Activated CD4-positive, alpha-beta memory T cell treated with anti-CD3 and anti-CD28 coated beads for 36 hours (primary cell): ENCODE measurements at regions of chr22 and their contacts with region 1.

Region 1: DNA sequence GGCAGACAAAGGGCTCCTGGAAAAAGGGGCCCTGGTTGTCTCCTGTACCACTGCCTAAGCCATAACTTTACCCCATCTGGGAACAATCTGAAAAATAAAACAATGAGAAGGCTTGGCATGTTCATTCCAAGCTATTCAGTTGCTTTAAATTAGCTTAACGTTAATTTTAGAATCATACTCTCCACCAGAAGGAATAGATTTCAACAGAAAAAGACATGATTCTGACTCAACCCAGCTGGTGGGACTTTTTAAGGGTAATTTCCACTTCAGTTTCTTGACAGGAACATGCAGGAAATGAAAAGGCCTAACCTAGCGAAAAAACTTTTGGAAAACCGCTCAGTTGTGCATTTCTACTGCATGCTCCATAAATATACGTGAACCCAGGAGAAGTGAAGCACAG is 7.9 kb downstream of the SF3A1 start:
- DNase-seq: no peak
- H3K4me3 Mint-ChIP-seq: peak overlapping the region; percentile 44
- H3K27ac Mint-ChIP-seq: peak overlapping the region; percentile 89
- H3K4me1 Mint-ChIP-seq: peaks cover 89% of the 10 kb centered on the region
- H3K27me3 Mint-ChIP-seq: no peaks in the 10 kb centered on the region

Region 2: GRCh38 chr22:29820961-29821789 is 527.6 kb before region 1 on chr22:
- CTCF ChIA-PET with region 1: no interaction called
- POLR2A ChIA-PET with region 1: no interaction called
- intact Hi-C with region 1: loop called (anchors 5 kb)
- DNase-seq: peak; percentile 69
- H3K4me3 Mint-ChIP-seq: no peak overlapping the region
- H3K27ac Mint-ChIP-seq: peak overlapping the region; percentile 84
- H3K4me1 Mint-ChIP-seq: peaks cover 8% of the 10 kb centered on the region
- H3K27me3 Mint-ChIP-seq: no peaks in the 10 kb centered on the region

Region 3: DNA sequence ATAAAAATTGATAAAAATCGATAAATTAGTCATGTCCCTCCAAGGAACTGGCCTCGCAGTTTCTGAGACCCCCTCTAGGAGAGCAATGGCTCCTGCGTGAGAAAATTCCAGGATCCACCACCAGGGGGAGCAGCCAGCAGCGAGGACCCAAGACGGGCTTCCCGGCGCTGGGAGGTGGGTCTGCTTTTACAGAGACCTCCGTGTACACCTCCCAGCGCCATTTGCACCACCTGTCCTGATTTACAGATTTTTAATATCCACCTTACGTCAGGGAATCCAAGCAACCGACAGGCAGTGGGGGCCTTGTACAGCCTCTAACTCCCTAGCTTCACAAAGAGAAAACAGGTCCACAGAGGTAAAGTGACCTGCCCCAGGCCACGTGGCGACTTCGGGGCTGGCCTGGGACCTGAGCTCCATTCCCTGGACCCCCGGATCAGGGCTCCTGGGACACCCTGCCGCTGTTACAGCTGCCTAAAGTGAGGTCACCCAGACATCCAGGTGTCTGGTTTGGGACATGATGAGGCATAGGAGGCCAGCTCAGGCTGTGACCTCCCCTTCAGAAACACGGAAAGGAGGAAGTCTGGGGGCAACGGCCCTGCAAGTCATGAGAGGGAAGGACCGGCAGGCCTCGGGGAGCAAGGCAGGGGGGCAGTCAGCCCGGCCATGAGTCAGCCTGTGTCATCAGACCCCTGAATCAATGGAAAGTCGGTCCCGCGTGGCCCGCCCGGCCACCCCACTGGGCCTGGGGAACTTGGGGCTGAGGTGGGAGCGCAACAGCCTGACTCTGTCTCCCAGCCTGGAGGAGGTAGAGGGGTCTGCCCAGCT is 85.7 kb before region 1 on chr22:
- CTCF ChIA-PET with region 1: interaction called, 3 read pairs
- POLR2A ChIA-PET with region 1: no interaction called
- intact Hi-C with region 1: loop called (anchors 1 kb)
- DNase-seq: peak; percentile 86
- H3K4me3 Mint-ChIP-seq: peak overlapping the region; percentile 71
- H3K27ac Mint-ChIP-seq: peak overlapping the region; percentile 69
- H3K4me1 Mint-ChIP-seq: peaks cover 34% of the 10 kb centered on the region
- H3K27me3 Mint-ChIP-seq: no peaks in the 10 kb centered on the region

Region 4: GRCh38 chr22:30305519-30305905 is 43.3 kb before region 1 on chr22:
- CTCF ChIA-PET with region 1: no interaction called
- POLR2A ChIA-PET with region 1: interaction called, 5 read pairs
- intact Hi-C with region 1: loop called (anchors 2 kb)
- DNase-seq: peak; percentile 74
- H3K4me3 Mint-ChIP-seq: peak overlapping the region; percentile 69
- H3K27ac Mint-ChIP-seq: peak overlapping the region; percentile 98
- H3K4me1 Mint-ChIP-seq: peaks cover 96% of the 10 kb centered on the region
- H3K27me3 Mint-ChIP-seq: no peaks in the 10 kb centered on the region

Region 5: GRCh38 chr22:30326706-30327362 is 22.0 kb before region 1 on chr22 and contains the start of gene TBC1D10A:
- CTCF ChIA-PET with region 1: interaction called, 4 read pairs
- POLR2A ChIA-PET with region 1: interaction called, 4 read pairs
- intact Hi-C with region 1: loop called (anchors 1 kb)
- DNase-seq: peak; percentile 96
- H3K4me3 Mint-ChIP-seq: peak within 1 kb of the TSS; percentile 83
- H3K27ac Mint-ChIP-seq: peak within 1 kb of the TSS; percentile 81
- H3K4me1 Mint-ChIP-seq: peaks cover 42% of the 10 kb centered on the region
- H3K27me3 Mint-ChIP-seq: no peaks in the 10 kb centered on the region
- total RNA-seq, gene TBC1D10A: 28.9 to 29.0 TPM

Region 6: GRCh38 chr22:30336752-30337460 is 11.9 kb before region 1 on chr22:
- CTCF ChIA-PET with region 1: no interaction called
- POLR2A ChIA-PET with region 1: interaction called, 6 read pairs
- intact Hi-C with region 1: loop called (anchors 1 kb)
- DNase-seq: no peak
- H3K4me3 Mint-ChIP-seq: no peak overlapping the region
- H3K27ac Mint-ChIP-seq: peak overlapping the region; percentile 54
- H3K4me1 Mint-ChIP-seq: peaks cover 41% of the 10 kb centered on the region
- H3K27me3 Mint-ChIP-seq: no peaks in the 10 kb centered on the region

Region 7: DNA sequence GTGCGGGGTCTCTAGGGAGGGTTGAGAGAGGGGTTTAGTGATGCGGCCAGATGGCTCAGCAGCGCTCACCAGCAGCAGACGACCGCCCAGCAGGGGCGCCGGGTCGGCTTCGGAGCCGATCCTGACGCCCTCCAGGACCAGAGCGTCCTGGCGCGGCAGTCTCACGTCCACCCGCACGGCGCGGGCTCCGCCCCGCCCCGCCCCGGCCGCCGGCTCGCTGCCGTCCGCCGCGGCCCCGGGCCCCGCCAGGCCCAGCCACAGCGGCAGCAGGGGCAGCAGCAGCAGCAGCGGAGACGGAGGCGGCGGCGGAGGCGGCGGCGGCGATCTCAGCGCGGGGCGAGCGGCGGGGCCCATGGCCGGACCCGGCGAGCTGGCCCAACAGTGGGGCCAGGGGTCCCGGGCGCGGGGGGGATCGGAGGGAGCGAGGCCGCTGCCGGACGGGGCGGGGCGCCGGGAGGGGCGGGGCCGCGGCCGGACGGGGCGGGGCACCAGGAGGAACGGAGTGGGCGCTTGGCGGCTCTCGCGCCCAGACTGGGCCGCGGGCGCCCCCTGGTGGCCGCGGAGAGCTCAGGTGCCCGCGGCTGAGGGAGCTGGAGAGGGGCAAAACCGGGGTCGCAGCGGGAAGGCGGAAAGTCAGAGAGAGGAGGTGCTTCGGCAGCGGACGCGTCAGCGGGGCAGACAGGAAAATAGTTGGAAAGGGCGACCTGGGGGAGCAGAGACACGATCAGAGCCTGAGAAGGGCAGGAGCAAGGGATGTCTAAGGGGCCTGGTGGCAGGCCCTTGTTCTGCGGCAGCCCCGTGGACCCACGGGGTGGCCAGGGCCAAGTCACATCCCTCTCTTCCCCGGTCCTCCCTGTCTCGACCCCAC is 38.4 kb after region 1 on chr22 and contains the start of gene RNF215:
- CTCF ChIA-PET with region 1: interaction called, 10 read pairs
- POLR2A ChIA-PET with region 1: no interaction called
- intact Hi-C with region 1: no loop called
- DNase-seq: peak; percentile 84
- H3K4me3 Mint-ChIP-seq: peak within 1 kb of the TSS; percentile 80
- H3K27ac Mint-ChIP-seq: peak within 1 kb of the TSS; percentile 39
- H3K4me1 Mint-ChIP-seq: peaks cover 24% of the 10 kb centered on the region
- H3K27me3 Mint-ChIP-seq: peaks cover 1% of the 10 kb centered on the region
- total RNA-seq, gene RNF215: 8.8 to 10.2 TPM